ENCODE measurements at regions of chr6 and their contacts with region 1.

Region 1: DNA sequence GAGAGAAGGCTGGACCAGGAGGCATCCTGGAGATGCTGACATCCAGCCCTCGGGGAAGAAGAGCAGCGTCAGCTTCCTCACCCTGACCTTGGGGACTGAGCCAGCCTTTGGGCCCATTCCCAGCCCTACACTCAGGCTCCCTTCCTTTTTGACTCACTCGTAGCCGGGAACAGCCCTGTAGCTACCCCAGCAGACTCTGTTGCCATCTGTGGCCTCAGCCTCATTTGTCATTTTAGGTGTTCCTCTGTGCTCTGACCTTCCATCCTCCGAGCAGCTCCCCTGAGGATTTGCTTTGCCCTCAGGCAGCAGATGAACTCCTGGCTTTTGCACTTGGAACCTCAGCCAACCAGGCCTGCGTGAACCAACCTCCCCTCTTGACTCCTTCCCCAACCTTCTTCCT is 67.5 kb downstream of the ELOVL2 start:
- DNase-seq: no peak
- H3K4me3 ChIP-seq: no peak overlapping the region
- H3K27ac ChIP-seq: no peak overlapping the region
- H3K4me1 ChIP-seq: no peaks in the 10 kb centered on the region
- H3K27me3 ChIP-seq: no peaks in the 10 kb centered on the region
- CTCF ChIP-seq: no peak
- POLR2A ChIP-seq: no peak

Region 2: DNA sequence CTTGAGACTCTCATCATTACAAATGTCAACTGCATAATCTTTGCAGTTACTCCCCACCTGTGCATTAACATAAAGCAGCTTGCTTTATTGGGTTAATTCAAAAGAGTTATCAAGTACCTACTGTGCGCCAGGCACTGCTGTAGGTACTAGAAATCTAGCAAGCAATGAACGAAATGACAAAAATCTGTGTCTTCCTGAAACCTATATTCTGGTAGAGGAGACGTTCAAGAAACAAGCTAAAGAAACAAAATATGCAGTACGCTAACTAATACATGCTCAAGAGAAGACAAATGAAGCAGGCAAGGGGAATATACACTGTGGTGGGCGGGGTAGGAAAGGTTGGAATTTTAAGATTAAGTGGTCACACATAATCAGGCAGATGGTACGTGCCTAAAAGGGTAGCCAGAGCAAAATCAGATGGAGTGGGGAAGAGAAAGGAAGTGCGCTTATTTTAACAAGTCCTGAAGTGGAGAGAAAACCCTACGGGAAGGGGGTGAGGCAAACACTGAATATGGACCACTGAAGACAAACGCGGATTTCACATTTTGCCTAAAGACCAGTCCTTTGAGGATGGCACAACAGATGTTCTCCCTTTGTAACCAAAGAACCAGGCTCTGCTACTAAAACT is 66.3 kb after region 1 on chr6:
- intact Hi-C with region 1: no loop called
- DNase-seq: no peak
- H3K4me3 ChIP-seq: peak overlapping the region in 1 of 3 donors; percentile 78
- H3K27ac ChIP-seq: no peak overlapping the region
- H3K4me1 ChIP-seq: no peaks in the 10 kb centered on the region
- H3K27me3 ChIP-seq: peaks cover 0 to 38% of the 10 kb centered on the region in 2 donors
- CTCF ChIP-seq: no peak
- POLR2A ChIP-seq: no peak

Region 3: GRCh38 chr6:11917951-11918738 is 941.6 kb after region 1 on chr6:
- intact Hi-C with region 1: loop called (anchors 5 kb)
- DNase-seq: no peak
- H3K4me3 ChIP-seq: no peak overlapping the region
- H3K27ac ChIP-seq: no peak overlapping the region
- H3K4me1 ChIP-seq: no peaks in the 10 kb centered on the region
- H3K27me3 ChIP-seq: no peaks in the 10 kb centered on the region
- CTCF ChIP-seq: no peak
- POLR2A ChIP-seq: no peak

Measured in breast epithelium (tissue), 4 donors.